Dorsolateral prefrontal cortex (tissue), 120 donors: ENCODE measurements at regions of chr16 and their contacts with region 1.

Region 1: DNA sequence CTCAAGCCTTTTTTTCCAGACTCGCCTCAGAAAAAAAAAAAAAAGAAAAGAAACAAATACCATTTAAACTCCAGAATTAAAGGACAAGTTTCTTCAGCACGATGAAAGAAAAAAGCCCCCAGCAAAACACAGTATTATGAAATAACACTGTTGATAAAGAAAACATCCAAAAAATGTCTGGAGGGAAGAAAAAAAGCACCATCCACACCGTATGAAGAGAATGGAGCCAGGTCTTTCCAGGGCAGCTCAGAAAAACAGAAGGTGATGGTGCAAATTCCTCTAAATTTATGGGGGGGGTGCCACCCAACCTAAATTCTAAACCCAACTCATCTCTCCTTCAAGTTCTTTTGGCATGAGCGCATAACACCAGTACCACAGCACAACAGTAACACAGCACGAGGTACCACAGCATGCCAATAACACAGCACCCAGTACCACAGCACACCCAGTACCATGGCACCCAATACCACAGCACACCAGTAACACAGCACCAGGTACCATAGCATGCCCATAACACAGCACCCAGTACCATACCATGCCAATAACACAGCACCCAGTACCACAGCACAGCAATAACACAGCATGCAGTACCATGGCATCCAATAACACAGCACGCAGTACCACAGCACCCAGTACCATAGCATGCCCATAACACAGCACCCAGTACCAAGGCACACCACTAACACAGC is 19.0 kb downstream of the AXIN1 start:
- DNase-seq: no peak
- H3K4me3 ChIP-seq: no peak overlapping the region
- H3K27ac ChIP-seq: no peak overlapping the region
- H3K27me3 ChIP-seq: no peaks in the 10 kb centered on the region
- CTCF ChIP-seq: no peak

Region 2: DNA sequence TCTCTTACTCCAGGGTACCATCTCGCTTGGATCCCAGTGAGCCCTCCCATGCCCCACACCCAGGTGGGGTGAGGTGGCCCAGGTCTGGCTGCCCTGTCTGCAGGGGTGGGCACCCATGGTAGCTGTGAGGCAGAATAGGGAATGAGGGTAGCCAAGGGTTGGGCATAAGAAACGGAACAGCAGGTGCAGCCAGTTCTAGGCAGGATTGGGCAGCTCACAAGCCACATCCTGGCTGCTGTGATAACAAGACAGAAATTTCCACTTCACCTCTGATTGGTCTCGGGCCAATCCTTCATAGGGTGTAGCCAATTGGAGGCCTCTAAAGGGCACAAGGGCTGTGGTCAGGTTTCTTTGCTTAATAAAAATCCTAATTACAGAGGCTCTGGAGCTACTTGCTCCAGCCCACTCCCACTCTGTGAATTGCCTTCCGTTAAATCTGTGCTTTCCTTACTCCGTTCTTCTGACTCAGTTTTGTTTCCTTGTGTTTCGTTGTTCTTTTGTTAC is 54.6 kb before region 1 on chr16:
- intact Hi-C with region 1: loop called in 1 of 2 experiments (anchors 5 kb)
- DNase-seq: peak in 2 of 10 donors; percentile 39 to 76
- H3K4me3 ChIP-seq: no peak overlapping the region
- H3K27ac ChIP-seq: peak overlapping the region in 4 of 59 donors; percentile 30 to 90 (median 73)
- H3K27me3 ChIP-seq: peaks cover 0 to 12% (median 0%) of the 10 kb centered on the region in 45 donors
- CTCF ChIP-seq: no peak

Region 3: DNA sequence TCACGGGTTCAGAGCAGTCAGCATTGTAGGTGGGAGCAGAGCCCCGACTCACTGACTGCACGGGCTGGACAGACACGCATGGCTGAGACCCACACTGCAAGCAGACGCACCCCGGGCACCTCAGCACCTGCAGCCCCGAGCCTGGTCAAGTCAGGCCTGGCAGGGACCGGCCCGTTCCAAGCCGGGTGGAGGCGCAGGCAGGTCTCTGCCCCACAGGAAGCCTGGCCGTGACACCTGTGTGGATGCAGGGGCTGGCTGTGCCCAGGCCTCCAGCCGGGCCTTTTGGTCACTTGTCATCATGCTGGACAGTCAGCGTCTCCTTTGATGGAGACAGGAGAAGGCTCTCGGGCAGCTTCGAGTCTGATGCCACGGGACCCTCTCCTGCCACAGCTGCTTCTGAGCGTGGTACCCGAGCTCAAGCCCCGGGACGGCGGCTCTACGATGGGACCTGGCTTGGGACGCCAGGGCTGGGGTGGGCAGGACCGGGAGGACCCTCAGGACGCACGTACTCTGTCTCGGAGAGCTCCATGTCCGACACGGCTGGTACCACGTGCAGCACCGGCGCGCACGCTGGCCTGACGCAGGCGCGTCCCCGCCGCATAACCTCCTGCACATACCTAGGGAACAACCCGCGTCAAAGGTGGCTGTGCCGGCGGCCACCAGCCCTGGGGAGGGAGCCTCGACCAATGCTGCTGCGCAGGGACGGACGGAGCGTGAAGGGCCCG is 42.7 kb before region 1 on chr16:
- intact Hi-C with region 1: loop called in 1 of 2 experiments (anchors 1 kb)
- DNase-seq: no peak
- H3K4me3 ChIP-seq: no peak overlapping the region
- H3K27ac ChIP-seq: peak overlapping the region in 1 of 59 donors; percentile 43
- H3K27me3 ChIP-seq: no peaks in the 10 kb centered on the region
- CTCF ChIP-seq: no peak